Activated CD4-positive, alpha-beta memory T cell treated with anti-CD3 and anti-CD28 coated beads for 36 hours (primary cell): ENCODE measurements at regions of chr12 and their contacts with region 1.

Region 1: GRCh38 chr12:25052196-25052913 is 103.5 kb upstream of the BCAT1 start:
- DNase-seq: peak; percentile 54
- H3K4me3 Mint-ChIP-seq: peak overlapping the region; percentile 91
- H3K27ac Mint-ChIP-seq: peak overlapping the region; percentile 97
- H3K4me1 Mint-ChIP-seq: peaks cover 41% of the 10 kb centered on the region
- H3K27me3 Mint-ChIP-seq: no peaks in the 10 kb centered on the region

Region 2: DNA sequence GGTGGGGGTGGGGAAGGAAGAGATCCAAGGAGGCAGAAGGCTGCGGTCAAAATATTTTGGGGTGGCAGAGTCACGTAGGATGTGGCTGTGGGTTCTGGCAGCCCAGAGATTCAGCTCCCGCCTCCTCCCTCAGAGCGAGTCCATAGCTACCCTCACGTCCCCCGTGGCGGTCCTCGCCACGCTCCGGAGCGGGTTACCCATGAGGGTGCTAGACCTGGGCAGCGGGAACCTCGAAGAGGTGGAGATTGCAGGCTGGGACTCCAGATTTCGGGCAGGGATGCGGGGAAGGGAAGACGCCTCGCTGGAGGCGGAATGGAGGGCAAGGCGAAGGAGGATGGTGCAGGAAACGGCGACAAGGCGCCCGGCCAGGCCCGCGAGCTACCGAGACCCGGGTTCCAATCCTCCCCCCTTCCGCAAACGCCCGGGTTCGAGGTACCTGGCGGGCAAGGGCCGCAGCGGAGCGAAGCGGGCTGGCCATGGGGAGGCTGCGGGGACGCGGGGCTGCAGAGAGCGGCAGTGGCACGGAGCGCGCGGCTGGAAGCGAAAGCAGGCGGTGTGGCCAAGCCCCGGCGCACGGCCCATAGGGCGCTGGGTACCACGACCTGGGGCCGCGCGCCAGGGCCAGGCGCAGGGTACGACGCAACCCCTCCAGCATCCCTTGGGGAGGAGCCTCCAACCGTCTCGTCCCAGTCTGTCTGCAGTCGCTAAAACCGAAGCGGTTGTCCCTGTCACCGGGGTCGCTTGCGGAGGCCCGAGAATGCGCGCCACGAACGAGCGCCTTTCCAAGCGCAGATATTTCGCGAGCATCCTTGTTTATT is 149.6 kb before region 1 on chr12:
- CTCF ChIA-PET with region 1: no interaction called
- POLR2A ChIA-PET with region 1: interaction called, 5 read pairs
- intact Hi-C with region 1: loop called (anchors 1 kb)
- DNase-seq: peak; percentile 39
- H3K4me3 Mint-ChIP-seq: peak overlapping the region; percentile 81
- H3K27ac Mint-ChIP-seq: peak overlapping the region; percentile 60
- H3K4me1 Mint-ChIP-seq: peaks cover 32% of the 10 kb centered on the region
- H3K27me3 Mint-ChIP-seq: peaks cover 19% of the 10 kb centered on the region

Region 3: DNA sequence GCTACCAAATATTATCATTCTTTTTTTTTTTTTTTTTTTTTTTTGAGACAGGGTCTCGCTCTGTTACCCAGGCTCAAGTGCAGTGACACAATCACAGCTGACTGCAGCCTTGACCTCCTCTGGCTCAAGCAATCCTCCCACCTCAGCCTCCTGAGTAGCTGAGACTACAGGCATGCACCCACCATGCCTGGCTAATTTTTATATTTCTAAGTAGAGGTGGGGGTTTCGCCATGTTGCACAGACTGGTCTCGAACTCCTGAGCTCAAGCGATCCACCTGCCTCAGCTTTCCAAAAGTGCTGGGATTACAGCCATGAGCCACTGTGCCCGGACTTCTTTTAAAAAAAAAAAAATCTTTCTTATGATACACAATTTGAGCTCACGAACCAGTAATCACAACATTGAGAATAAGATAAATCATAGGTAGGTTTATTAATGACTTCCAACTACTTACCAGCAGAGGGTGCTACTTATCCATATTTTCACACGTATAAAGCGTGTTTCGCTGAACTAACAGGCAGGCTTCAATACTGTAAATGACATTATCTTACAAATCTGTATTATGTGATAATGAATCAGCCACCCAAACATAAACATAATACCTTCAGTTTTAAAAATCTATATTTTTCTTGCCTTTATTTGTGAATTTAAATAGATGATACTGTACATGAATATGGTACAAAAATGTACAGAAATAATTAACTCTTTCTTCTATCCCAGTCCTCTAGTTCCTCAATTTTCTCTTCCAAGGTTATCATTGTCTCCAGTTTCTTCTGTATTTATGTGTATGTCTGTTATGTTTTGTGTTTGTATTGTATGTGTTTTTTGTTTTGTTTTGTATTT is 60.9 kb before region 1 on chr12:
- CTCF ChIA-PET with region 1: interaction called, 16 read pairs
- POLR2A ChIA-PET with region 1: no interaction called
- intact Hi-C with region 1: loop called (anchors 1 kb)
- DNase-seq: no peak
- H3K4me3 Mint-ChIP-seq: no peak overlapping the region
- H3K27ac Mint-ChIP-seq: no peak overlapping the region
- H3K4me1 Mint-ChIP-seq: peaks cover 4% of the 10 kb centered on the region
- H3K27me3 Mint-ChIP-seq: peaks cover 2% of the 10 kb centered on the region

Region 4: GRCh38 chr12:25089738-25090137 is 37.4 kb after region 1 on chr12:
- CTCF ChIA-PET with region 1: interaction called, 5 read pairs
- POLR2A ChIA-PET with region 1: interaction called, 3 read pairs
- intact Hi-C with region 1: loop called (anchors 1 kb)
- DNase-seq: peak; percentile 45
- H3K4me3 Mint-ChIP-seq: no peak overlapping the region
- H3K27ac Mint-ChIP-seq: no peak overlapping the region
- H3K4me1 Mint-ChIP-seq: peaks cover 30% of the 10 kb centered on the region
- H3K27me3 Mint-ChIP-seq: no peaks in the 10 kb centered on the region

Region 5: DNA sequence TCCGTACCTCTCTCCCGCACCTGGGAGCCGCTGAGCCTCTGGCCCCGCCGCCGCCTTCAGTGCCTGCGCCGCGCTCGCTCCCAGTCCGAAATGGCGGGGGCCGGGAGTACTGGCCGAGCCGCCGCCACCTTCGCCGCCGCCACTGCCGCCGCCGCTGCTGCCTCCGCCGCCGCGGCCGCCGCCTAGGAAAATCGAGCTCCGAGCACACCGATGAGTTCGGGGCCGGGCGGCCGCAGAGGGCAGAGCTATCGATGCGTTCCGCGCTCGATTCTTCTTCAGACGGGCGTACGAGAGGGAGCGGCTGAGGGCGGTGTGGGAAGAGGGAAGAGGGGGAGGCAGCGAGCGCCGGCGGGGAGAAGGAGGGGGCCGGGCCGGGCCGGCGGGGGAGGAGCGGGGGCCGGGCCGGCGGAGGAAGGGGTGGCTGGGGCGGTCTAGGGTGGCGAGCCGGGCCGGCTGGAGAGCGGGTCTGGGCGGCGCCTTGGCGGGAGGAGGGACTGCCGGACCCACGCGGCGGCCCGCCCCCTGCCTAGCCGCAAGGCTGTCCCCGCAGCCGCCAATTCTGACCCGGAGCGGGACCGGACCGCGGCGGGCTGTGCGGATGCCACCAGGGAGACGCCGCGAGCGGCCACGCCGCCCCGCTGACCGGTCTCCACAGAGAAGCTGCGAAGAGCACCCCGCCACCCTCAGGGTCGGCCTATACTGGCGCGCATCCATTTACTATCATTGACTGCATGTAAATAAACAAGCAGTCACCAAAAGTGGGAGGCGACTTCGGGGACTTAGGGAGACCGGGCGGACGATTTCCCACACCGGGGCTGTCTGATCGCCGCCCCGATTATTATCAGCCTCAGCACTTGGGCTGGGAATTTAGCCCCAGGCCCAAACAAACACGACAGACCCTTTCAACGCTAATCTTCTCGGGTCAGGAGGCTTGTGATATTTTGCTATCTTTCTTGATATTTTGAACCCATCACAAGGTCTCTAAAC is 198.7 kb after region 1 on chr12 and contains the start of gene KRAS:
- CTCF ChIA-PET with region 1: no interaction called
- POLR2A ChIA-PET with region 1: no interaction called
- intact Hi-C with region 1: loop called (anchors 2 kb)
- DNase-seq: peak; percentile 92
- H3K4me3 Mint-ChIP-seq: peak within 1 kb of the TSS; percentile 91
- H3K27ac Mint-ChIP-seq: peak within 1 kb of the TSS; percentile 82
- H3K4me1 Mint-ChIP-seq: peaks cover 30% of the 10 kb centered on the region
- H3K27me3 Mint-ChIP-seq: no peaks in the 10 kb centered on the region
- total RNA-seq, gene KRAS: 15.9 to 17.8 TPM

Region 6: GRCh38 chr12:25482625-25483024 is 430.3 kb after region 1 on chr12:
- CTCF ChIA-PET with region 1: no interaction called
- POLR2A ChIA-PET with region 1: no interaction called
- intact Hi-C with region 1: no loop called
- DNase-seq: no peak
- H3K4me3 Mint-ChIP-seq: no peak overlapping the region
- H3K27ac Mint-ChIP-seq: no peak overlapping the region
- H3K4me1 Mint-ChIP-seq: no peaks in the 10 kb centered on the region
- H3K27me3 Mint-ChIP-seq: peaks cover 5% of the 10 kb centered on the region

Region 7: GRCh38 chr12:26863502-26863901 is 1811.1 kb after region 1 on chr12:
- CTCF ChIA-PET with region 1: no interaction called
- POLR2A ChIA-PET with region 1: no interaction called
- intact Hi-C with region 1: no loop called
- DNase-seq: no peak
- H3K4me3 Mint-ChIP-seq: no peak overlapping the region
- H3K27ac Mint-ChIP-seq: no peak overlapping the region
- H3K4me1 Mint-ChIP-seq: peaks cover 10% of the 10 kb centered on the region
- H3K27me3 Mint-ChIP-seq: peaks cover 3% of the 10 kb centered on the region